ENCODE measurements at regions of chr11 and their contacts with region 1.

Region 1: DNA sequence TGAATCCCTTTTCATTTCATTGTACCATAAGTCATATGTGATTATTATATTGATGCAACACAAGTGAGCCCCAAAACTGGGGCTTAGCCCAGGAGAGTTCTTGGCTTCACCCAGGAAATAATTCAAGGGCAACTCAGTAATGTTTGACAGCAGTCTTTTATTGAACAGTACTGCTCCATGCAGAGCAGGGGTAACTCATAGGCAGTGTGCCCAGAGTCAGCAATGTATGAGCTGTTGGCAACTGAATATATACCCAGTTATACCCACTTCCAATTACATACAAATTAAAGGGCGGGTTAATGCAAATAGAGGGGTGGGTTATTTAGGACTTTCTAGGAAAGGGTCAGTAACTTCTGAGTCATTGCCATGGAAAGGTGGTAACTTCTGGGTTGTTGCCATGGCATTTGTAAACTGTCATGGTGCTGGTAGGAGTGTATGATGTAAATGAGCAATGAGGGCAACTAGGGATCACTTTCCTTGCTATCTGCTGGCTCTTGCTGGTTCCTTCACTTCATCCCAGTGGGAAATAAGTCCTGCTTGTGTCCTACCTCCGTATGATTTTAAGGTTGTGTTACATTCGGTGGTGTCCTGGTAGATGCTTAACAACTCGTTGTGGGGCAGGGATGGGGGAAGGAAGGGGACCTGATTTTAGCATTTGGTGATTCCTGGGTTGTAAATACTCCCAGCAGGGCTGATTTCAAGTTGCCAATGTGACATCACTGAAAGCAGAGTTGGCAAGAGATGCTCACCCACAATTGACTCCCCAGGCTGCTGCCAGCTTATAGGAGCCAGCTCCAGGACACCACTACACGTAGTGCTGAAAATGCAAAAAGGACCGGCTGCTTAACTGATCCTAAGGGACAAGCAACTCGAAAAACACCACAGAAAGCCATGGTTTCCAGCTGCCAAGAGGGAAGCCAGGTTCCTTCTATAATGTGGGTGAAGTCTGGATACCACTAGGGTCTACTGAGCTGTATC is 70.1 kb downstream of the SYT9 start:
- DNase-seq: no peak
- H3K4me3 ChIP-seq: no peak overlapping the region
- CTCF ChIP-seq: no peak
- POLR2A ChIP-seq: no peak

Region 2: DNA sequence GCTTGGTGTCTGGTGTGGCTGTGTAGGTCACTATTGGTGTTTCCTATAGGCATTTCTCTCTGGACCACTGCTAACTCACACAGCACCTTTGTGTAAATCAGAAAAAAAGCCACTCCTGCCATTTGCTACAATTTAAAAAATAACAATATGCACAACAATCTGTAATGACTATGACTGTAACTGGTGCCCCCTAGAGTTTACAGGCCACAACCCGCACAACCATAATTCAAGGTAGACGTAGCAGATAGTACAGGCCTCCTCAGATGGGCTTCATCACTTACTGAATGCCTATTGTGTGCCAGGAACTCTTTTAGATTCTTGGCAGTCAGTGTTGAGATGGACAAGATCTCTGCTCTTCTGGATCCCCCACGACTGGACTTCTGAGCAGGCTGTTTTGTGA is 22.4 kb before region 1 on chr11:
- intact Hi-C with region 1: loop called (anchors 1 kb)
- DNase-seq: no peak
- H3K4me3 ChIP-seq: no peak overlapping the region
- CTCF ChIP-seq: no peak
- POLR2A ChIP-seq: no peak

Region 3: GRCh38 chr11:7467652-7468051 is 145.9 kb after region 1 on chr11:
- intact Hi-C with region 1: no loop called
- DNase-seq: no peak
- H3K4me3 ChIP-seq: no peak overlapping the region
- CTCF ChIP-seq: no peak
- POLR2A ChIP-seq: no peak

Measured in lower leg skin (tissue), 4 donors.